Esophagus muscularis mucosa (tissue), 4 donors: ENCODE measurements at regions of chr10 and their contacts with region 1.

Region 1: GRCh38 chr10:35884657-35885071 is 242.6 kb upstream of the FZD8 start:
- DNase-seq: peak; percentile 57
- H3K4me3 ChIP-seq: no peak overlapping the region
- H3K27ac ChIP-seq: no peak overlapping the region
- H3K4me1 ChIP-seq: peaks cover 3 to 14% (median 9%) of the 10 kb centered on the region in 4 donors
- H3K27me3 ChIP-seq: no peaks in the 10 kb centered on the region
- CTCF ChIP-seq: no peak
- EP300 ChIP-seq: no peak
- POLR2A ChIP-seq: no peak

Region 2: GRCh38 chr10:35607475-35608327 is 277.0 kb before region 1 on chr10:
- intact Hi-C with region 1: no loop called
- DNase-seq: no peak
- H3K4me3 ChIP-seq: peak overlapping the region; percentile 50 to 60 (median 54)
- H3K27ac ChIP-seq: no peak overlapping the region
- H3K4me1 ChIP-seq: peaks cover 6 to 14% (median 12%) of the 10 kb centered on the region in 4 donors
- H3K27me3 ChIP-seq: peaks cover 0 to 81% (median 19%) of the 10 kb centered on the region in 4 donors
- CTCF ChIP-seq: no peak
- EP300 ChIP-seq: no peak
- POLR2A ChIP-seq: no peak

Region 3: GRCh38 chr10:35778306-35778705 is 106.4 kb before region 1 on chr10:
- intact Hi-C with region 1: no loop called
- DNase-seq: no peak
- H3K4me3 ChIP-seq: no peak overlapping the region
- H3K27ac ChIP-seq: no peak overlapping the region
- H3K4me1 ChIP-seq: peaks cover 0 to under 1% (median 0%) of the 10 kb centered on the region in 4 donors
- H3K27me3 ChIP-seq: peaks cover 0 to 7% (median 0%) of the 10 kb centered on the region in 4 donors
- CTCF ChIP-seq: no peak
- EP300 ChIP-seq: no peak
- POLR2A ChIP-seq: no peak

Region 4: GRCh38 chr10:35896001-35896400 is 11.3 kb after region 1 on chr10:
- intact Hi-C with region 1: loop called (anchors 1 kb)
- DNase-seq: no peak
- H3K4me3 ChIP-seq: no peak overlapping the region
- H3K27ac ChIP-seq: no peak overlapping the region
- H3K4me1 ChIP-seq: no peaks in the 10 kb centered on the region
- H3K27me3 ChIP-seq: no peaks in the 10 kb centered on the region
- CTCF ChIP-seq: no peak
- EP300 ChIP-seq: no peak
- POLR2A ChIP-seq: no peak

Region 5: GRCh38 chr10:36362257-36362656 is 477.6 kb after region 1 on chr10:
- intact Hi-C with region 1: no loop called
- DNase-seq: no peak
- H3K4me3 ChIP-seq: no peak overlapping the region
- H3K27ac ChIP-seq: no peak overlapping the region
- H3K4me1 ChIP-seq: no peaks in the 10 kb centered on the region
- H3K27me3 ChIP-seq: no peaks in the 10 kb centered on the region
- CTCF ChIP-seq: no peak
- EP300 ChIP-seq: no peak
- POLR2A ChIP-seq: no peak

Region 6: DNA sequence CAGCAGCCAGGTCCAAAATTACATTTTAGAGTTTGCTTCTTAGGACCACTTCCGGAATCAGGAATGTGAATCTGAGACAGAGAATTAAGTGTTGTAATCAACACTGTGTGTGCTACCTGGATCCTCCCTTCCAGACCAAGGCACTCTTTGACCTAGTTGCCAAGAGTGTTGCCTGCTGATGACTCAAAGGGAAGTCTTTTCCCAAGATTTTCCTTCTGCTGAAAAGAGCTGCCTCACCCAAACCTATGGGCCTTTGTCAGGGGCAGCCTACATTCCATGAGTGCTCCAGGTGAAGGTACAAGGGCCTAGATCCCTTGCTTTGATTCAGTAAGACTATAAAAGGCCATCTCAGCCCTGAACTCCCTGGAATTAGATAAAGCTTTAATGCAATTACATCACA is 528.3 kb after region 1 on chr10:
- intact Hi-C with region 1: no loop called
- DNase-seq: no peak
- H3K4me3 ChIP-seq: no peak overlapping the region
- H3K27ac ChIP-seq: no peak overlapping the region
- H3K4me1 ChIP-seq: no peaks in the 10 kb centered on the region
- H3K27me3 ChIP-seq: no peaks in the 10 kb centered on the region
- CTCF ChIP-seq: no peak
- EP300 ChIP-seq: no peak
- POLR2A ChIP-seq: no peak